ENCODE measurements at regions of chr10 and their contacts with region 1.

Region 1: GRCh38 chr10:24197263-24197662 is 11.7 kb upstream of the KIAA1217 start:
- DNase-seq: no peak
- H3K4me3 ChIP-seq: no peak overlapping the region
- CTCF ChIP-seq: no peak

Region 2: DNA sequence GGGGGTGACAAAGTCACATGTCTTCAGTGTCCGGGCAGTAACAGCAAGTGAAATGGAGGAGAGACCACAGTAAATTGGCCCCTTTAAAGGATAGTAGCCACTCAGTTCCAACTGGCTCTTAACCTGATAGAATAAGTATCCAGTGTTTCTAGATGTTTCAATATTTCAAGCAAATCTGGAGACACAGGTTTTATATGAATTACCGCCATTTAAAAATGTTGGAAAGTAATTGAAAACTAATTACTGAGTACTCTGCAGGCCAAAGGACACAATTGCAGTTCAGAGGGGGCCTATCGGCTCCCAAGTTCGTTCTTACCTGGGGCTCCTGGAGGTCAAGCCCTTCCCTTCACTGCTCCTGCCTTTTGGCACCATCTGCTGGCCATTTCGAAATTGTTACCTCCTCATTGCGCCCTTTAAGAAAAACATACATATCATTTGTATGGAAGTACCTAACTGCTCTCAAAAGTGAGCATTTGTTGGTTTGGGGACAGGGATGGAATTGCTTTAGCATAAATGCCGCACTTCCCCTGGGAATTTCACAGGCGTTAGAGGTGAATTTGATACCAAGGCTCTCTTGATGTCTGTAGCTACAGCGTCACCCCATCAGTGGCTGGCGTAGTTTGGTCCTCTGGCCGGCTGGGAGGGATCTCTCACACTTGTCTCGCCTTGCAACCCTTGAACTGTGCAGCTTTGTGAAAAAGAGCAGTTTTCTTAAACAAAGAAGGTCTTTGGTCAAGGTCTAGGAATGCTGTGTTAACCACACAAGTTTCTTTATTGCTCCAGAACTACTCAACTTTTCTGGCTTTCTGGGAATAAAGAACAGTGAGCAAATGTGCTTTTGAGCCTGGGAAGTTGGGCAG is 306.4 kb after region 1 on chr10:
- in situ Hi-C with region 1: loop called (anchors 5 kb)
- DNase-seq: peak; percentile 44
- H3K4me3 ChIP-seq: no peak overlapping the region
- CTCF ChIP-seq: peak; percentile 65

Measured in astrocyte of the cerebellum (primary cell).